ENCODE measurements at regions of chr1 and their contacts with region 1.

Region 1: GRCh38 chr1:44318097-44319088 is 36.7 kb downstream of the ERI3 start:
- DNase-seq: peak; percentile 61
- ATAC-seq: no peak
- H3K4me3 Mint-ChIP-seq: no peak overlapping the region
- H3K27ac Mint-ChIP-seq: no peak overlapping the region
- H3K4me1 Mint-ChIP-seq: no peaks in the 10 kb centered on the region
- H3K27me3 Mint-ChIP-seq: no peaks in the 10 kb centered on the region
- CTCF ChIP-seq: peak; percentile 97

Region 2: DNA sequence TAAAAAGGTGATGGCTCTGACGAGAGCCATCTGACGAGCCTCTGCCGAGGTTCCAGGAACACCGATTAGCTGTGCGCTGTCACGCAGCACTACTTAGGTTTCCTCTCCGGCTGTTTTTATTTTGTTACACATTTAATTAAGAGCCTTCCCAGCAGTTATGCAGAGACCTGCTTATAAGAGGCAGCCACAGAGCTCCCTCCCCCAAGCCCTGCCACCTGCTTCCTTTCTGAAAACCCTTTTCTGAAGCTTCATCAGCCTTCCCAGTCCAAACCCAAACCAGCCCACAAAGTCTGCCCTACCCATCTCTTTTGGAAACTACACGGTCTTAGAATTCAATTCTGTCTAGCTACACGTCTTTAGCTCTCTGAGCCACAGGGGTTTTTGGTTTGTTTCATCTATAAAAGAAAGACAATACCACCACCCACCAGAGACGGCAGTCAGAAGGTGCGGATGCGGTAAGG is 12.4 kb before region 1 on chr1:
- CTCF ChIA-PET with region 1: interaction called, 22 read pairs
- POLR2A ChIA-PET with region 1: interaction called, 3 read pairs
- intact Hi-C with region 1: no loop called
- DNase-seq: peak; percentile 68
- ATAC-seq: peak; percentile 93
- H3K4me3 Mint-ChIP-seq: peak overlapping the region; percentile 4
- H3K27ac Mint-ChIP-seq: peak overlapping the region; percentile 90
- H3K4me1 Mint-ChIP-seq: peaks cover 24% of the 10 kb centered on the region
- H3K27me3 Mint-ChIP-seq: no peaks in the 10 kb centered on the region
- CTCF ChIP-seq: no peak

Region 3: DNA sequence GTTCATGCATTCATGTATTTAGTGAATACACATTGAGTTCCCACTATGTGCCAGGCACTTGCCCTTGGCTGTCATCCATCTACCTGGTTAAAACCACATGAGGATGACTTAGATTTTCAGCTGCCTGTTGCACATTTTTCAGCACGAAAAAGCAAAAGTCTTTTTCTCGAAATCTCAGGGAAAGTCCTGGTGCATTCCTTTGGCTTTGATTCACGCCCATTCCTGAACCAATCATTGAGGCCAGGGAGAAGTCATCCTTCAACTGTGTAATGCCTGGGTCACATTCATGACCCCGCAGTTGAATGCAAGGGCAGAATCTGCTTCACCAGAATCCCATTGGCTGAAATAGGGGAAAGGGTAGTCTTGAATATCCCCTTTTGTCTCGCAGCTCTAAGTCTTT is 171.1 kb after region 1 on chr1:
- CTCF ChIA-PET with region 1: no interaction called
- POLR2A ChIA-PET with region 1: no interaction called
- intact Hi-C with region 1: no loop called
- DNase-seq: no peak
- ATAC-seq: no peak
- H3K4me3 Mint-ChIP-seq: no peak overlapping the region
- H3K27ac Mint-ChIP-seq: no peak overlapping the region
- H3K4me1 Mint-ChIP-seq: no peaks in the 10 kb centered on the region
- H3K27me3 Mint-ChIP-seq: peaks cover 5% of the 10 kb centered on the region
- CTCF ChIP-seq: no peak

Measured in activated CD8-positive, alpha-beta T cell treated with anti-CD3 and anti-CD28 coated beads for 36 hours (primary cell).